HCT116 (cell line): ENCODE measurements at regions of chr9 and their contacts with region 1.

Region 1: GRCh38 chr9:19320495-19320894 is 59.5 kb downstream of the RPS6 start:
- DNase-seq: no peak
- ATAC-seq: no peak
- H3K4me3 ChIP-seq: no peak overlapping the region
- H3K27ac ChIP-seq: no peak overlapping the region
- H3K4me1 ChIP-seq: no peaks in the 10 kb centered on the region
- H3K27me3 ChIP-seq: no peaks in the 10 kb centered on the region
- CTCF ChIP-seq: no peak
- POLR2A ChIP-seq: no peak
- RAD21 ChIP-seq: no peak

Region 2: DNA sequence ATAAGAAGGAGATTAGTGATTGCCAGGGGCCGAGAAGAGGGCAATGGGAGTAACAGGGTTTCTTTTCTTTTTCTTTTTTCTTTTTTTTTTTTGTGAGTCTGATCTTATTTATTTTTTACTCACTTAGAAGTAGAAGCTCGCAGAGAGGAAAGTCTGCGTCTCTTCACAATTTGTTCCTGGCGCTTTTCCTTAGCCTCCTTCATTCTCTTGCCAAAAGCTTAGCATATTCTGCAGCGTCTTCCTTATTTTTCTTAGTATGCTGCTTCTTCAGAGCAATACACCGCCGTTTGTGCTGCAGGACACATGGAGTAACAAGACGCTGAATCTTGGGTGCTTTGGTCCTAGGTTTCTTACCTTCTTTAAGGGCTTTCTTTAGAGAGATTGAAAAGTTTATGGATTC is 120.3 kb before region 1 on chr9:
- CTCF ChIA-PET with region 1: no interaction called
- POLR2A ChIA-PET with region 1: no interaction called
- RAD21 ChIA-PET with region 1: no interaction called
- intact Hi-C with region 1: no loop called
- DNase-seq: no peak
- ATAC-seq: no peak
- H3K4me3 ChIP-seq: no peak overlapping the region
- H3K27ac ChIP-seq: no peak overlapping the region
- H3K4me1 ChIP-seq: no peaks in the 10 kb centered on the region; a peak in 1 of 4 replicates
- H3K27me3 ChIP-seq: no peaks in the 10 kb centered on the region
- CTCF ChIP-seq: no peak
- POLR2A ChIP-seq: no peak
- RAD21 ChIP-seq: no peak

Region 3: DNA sequence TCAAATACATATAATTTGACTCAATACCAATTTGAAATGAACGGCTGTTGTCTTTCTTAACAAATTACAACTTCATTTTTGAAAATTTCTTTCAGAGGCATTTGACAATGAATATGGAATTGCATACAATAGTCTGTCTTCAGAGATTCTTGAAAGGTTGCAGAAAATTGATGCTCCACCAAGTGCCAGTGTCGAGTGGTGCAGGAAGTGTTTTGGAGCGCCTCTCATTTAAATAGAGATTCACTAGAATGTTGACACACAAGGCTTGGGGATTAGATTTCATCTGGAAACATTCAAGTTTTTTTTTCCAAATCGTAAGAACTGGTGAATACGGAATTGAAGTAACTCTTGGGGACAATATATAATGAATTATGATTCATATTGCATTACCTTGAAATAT is 51.4 kb after region 1 on chr9:
- CTCF ChIA-PET with region 1: no interaction called
- POLR2A ChIA-PET with region 1: no interaction called
- RAD21 ChIA-PET with region 1: no interaction called
- intact Hi-C with region 1: no loop called
- DNase-seq: no peak
- ATAC-seq: 0 out of 2 replicates have a peak, but pooled peaks have one; percentile 44
- H3K4me3 ChIP-seq: no peak overlapping the region
- H3K27ac ChIP-seq: no peak overlapping the region
- H3K4me1 ChIP-seq: no peaks in the 10 kb centered on the region
- H3K27me3 ChIP-seq: no peaks in the 10 kb centered on the region
- CTCF ChIP-seq: peak in 1 of 3 experiments; percentile 21; a peak in 1 of 6 replicates
- POLR2A ChIP-seq: no peak
- RAD21 ChIP-seq: peak; percentile 9; the same call in 1 of the 2 replicates

Region 4: DNA sequence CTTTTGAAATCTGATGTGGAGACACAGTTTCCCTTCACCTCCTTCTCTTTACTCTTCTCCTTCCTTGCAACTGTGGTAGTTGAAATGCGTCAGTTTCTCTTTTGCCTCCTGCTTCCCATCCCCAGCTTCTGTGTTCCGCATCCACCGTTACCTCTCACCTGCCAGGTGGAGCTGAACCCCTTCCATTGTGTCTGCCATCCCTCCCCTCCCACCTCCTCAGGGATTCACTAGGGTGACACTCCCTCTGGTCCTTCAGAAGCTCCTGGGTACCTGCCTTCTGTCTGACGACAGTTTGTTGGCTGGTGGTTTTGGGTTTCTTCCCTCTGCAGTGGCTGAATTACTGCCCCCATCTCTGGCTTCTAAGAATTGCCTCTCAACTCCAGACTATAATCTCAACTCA is 336.2 kb after region 1 on chr9:
- CTCF ChIA-PET with region 1: no interaction called
- POLR2A ChIA-PET with region 1: no interaction called
- RAD21 ChIA-PET with region 1: no interaction called
- intact Hi-C with region 1: loop called (anchors 5 kb)
- DNase-seq: no peak
- ATAC-seq: no peak
- H3K4me3 ChIP-seq: no peak overlapping the region
- H3K27ac ChIP-seq: no peak overlapping the region
- H3K4me1 ChIP-seq: no peaks in the 10 kb centered on the region
- H3K27me3 ChIP-seq: peaks cover 41% of the 10 kb centered on the region
- CTCF ChIP-seq: no peak
- POLR2A ChIP-seq: no peak
- RAD21 ChIP-seq: no peak